ENCODE measurements at regions of chr11 and their contacts with region 1.

Region 1: GRCh38 chr11:6531267-6531752 is 34.2 kb downstream of the DNHD1 start:
- DNase-seq: no peak
- H3K4me3 ChIP-seq: no peak overlapping the region
- H3K27ac ChIP-seq: no peak overlapping the region
- H3K27me3 ChIP-seq: no peaks in the 10 kb centered on the region
- CTCF ChIP-seq: peak; percentile 82

Region 2: GRCh38 chr11:6251120-6251733 is 280.1 kb before region 1 on chr11:
- CTCF ChIA-PET with region 1: no interaction called
- POLR2A ChIA-PET with region 1: no interaction called
- DNase-seq: peak; percentile 32
- H3K4me3 ChIP-seq: no peak overlapping the region
- H3K27ac ChIP-seq: no peak overlapping the region
- H3K27me3 ChIP-seq: peaks cover 7% of the 10 kb centered on the region
- CTCF ChIP-seq: peak; percentile 92

Region 3: DNA sequence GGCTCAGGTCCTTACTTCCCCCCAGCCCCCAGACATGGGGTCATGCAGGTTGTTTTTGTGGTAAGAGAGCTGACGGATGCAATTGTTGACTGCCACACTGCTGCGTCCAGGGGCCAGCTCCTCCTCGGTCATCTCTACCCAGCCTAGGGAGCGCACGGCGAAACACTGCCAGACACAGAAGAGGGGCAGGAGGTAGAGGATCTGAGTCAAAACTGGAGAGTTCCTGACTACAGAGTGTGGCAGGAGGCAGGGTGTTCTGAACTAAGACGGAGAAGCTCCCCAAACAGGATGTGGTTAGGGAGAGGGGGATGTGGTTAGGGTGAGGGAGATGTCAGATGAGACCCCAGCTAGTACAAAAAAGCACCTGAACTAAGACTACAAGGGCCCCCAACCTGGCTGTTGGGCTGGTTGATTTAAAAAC is 128.7 kb before region 1 on chr11:
- CTCF ChIA-PET with region 1: no interaction called
- POLR2A ChIA-PET with region 1: no interaction called
- DNase-seq: no peak
- H3K4me3 ChIP-seq: no peak overlapping the region
- H3K27ac ChIP-seq: no peak overlapping the region
- H3K27me3 ChIP-seq: no peaks in the 10 kb centered on the region
- CTCF ChIP-seq: no peak

Region 4: GRCh38 chr11:6481012-6481923 is 50.0 kb before region 1 on chr11 and contains the starts of genes ARFIP2 and TIMM10B:
- CTCF ChIA-PET with region 1: no interaction called
- POLR2A ChIA-PET with region 1: no interaction called
- DNase-seq: peak; percentile 95
- H3K4me3 ChIP-seq: peak within 1 kb of the TSS; percentile 97
- H3K27ac ChIP-seq: peak within 1 kb of the TSS; percentile 94
- H3K27me3 ChIP-seq: no peaks in the 10 kb centered on the region
- CTCF ChIP-seq: no peak
- polyA plus RNA-seq, gene ARFIP2: 79.1 and 88.2 TPM in 2 replicates
- polyA plus RNA-seq, gene TIMM10B: 26.7 and 33.1 TPM in 2 replicates

Region 5: DNA sequence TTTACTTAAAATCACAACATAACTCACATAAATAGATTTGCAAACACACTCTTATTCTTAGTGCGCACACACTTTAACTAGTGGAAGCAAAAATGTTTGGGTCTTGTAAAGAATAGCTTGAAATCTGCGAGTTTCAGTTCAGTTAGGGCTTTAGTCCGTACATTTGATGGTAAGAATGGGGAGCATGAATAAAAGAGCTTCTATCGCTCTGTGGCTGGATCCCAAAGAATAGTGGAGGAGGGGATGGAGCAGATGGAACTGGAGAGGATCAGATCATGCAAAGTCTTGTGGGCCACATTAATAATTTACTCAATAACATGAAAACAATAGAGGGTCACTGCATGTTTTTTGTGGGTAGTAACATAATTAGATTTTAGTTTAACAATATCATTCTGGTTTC is 10.0 kb after region 1 on chr11:
- CTCF ChIA-PET with region 1: interaction called, 18 read pairs
- POLR2A ChIA-PET with region 1: no interaction called
- DNase-seq: no peak
- H3K4me3 ChIP-seq: no peak overlapping the region
- H3K27ac ChIP-seq: no peak overlapping the region
- H3K27me3 ChIP-seq: no peaks in the 10 kb centered on the region
- CTCF ChIP-seq: no peak

Region 6: GRCh38 chr11:6603287-6604080 is 72.2 kb after region 1 on chr11 and contains the starts of genes ILK and RRP8:
- CTCF ChIA-PET with region 1: interaction called, 10 read pairs
- POLR2A ChIA-PET with region 1: no interaction called
- DNase-seq: peak; percentile 66
- H3K4me3 ChIP-seq: peak within 1 kb of the TSS; percentile 99
- H3K27ac ChIP-seq: peak within 1 kb of the TSS; percentile 89
- H3K27me3 ChIP-seq: no peaks in the 10 kb centered on the region
- CTCF ChIP-seq: peak; percentile 22; the same call in 1 of the 2 replicates
- polyA plus RNA-seq, gene ILK: 362 and 417 TPM in 2 replicates
- polyA plus RNA-seq, gene RRP8: 13.7 and 16.3 TPM in 2 replicates

Region 7: GRCh38 chr11:6695377-6695776 is 164.1 kb after region 1 on chr11:
- CTCF ChIA-PET with region 1: interaction called, 11 read pairs
- POLR2A ChIA-PET with region 1: no interaction called
- DNase-seq: no peak
- H3K4me3 ChIP-seq: no peak overlapping the region
- H3K27ac ChIP-seq: no peak overlapping the region
- H3K27me3 ChIP-seq: no peaks in the 10 kb centered on the region
- CTCF ChIP-seq: no peak